Naive thymus-derived CD4-positive, alpha-beta T cell (primary cell): ENCODE measurements at regions of chr2 and their contacts with region 1.

Region 1: GRCh38 chr2:8761529-8762164 is 75.8 kb downstream of the KIDINS220 start:
- DNase-seq: peak in 4 of 9 donors; percentile 1 to 17 (median 10)
- ATAC-seq: no peak
- H3K4me3 ChIP-seq: no peak overlapping the region
- H3K4me3 Mint-ChIP-seq: no peak overlapping the region
- H3K27ac ChIP-seq: no peak overlapping the region
- H3K27ac Mint-ChIP-seq: no peak overlapping the region
- H3K4me1 ChIP-seq: no peaks in the 10 kb centered on the region
- H3K4me1 Mint-ChIP-seq: peaks cover 0 to 10% (median 0%) of the 10 kb centered on the region in 7 donors
- H3K27me3 ChIP-seq: no peaks in the 10 kb centered on the region
- H3K27me3 Mint-ChIP-seq: no peaks in the 10 kb centered on the region

Region 2: GRCh38 chr2:7203055-7203467 is 1558.6 kb before region 1 on chr2:
- CTCF ChIA-PET with region 1: no interaction called
- POLR2A ChIA-PET with region 1: no interaction called
- intact Hi-C with region 1: loop called (anchors 1 to 2 kb)
- DNase-seq: peak; percentile 31 to 65 (median 55)
- ATAC-seq: peak; percentile 81
- H3K4me3 ChIP-seq: no peak overlapping the region
- H3K4me3 Mint-ChIP-seq: no peak overlapping the region
- H3K27ac ChIP-seq: no peak overlapping the region
- H3K27ac Mint-ChIP-seq: no peak overlapping the region
- H3K4me1 ChIP-seq: no peaks in the 10 kb centered on the region
- H3K4me1 Mint-ChIP-seq: peaks cover 0 to 6% (median 0%) of the 10 kb centered on the region in 7 donors
- H3K27me3 ChIP-seq: no peaks in the 10 kb centered on the region
- H3K27me3 Mint-ChIP-seq: no peaks in the 10 kb centered on the region

Region 3: GRCh38 chr2:8692779-8693154 is 68.9 kb before region 1 on chr2:
- CTCF ChIA-PET with region 1: no interaction called
- POLR2A ChIA-PET with region 1: no interaction called
- intact Hi-C with region 1: loop called in 1 of 2 experiments (anchors 1 kb)
- DNase-seq: no peak
- ATAC-seq: no peak
- H3K4me3 ChIP-seq: no peak overlapping the region
- H3K4me3 Mint-ChIP-seq: peak overlapping the region in 1 of 10 donors; percentile 31
- H3K27ac ChIP-seq: no peak overlapping the region
- H3K27ac Mint-ChIP-seq: no peak overlapping the region
- H3K4me1 ChIP-seq: no peaks in the 10 kb centered on the region
- H3K4me1 Mint-ChIP-seq: peaks cover 0 to 6% (median 4%) of the 10 kb centered on the region in 7 donors
- H3K27me3 ChIP-seq: no peaks in the 10 kb centered on the region
- H3K27me3 Mint-ChIP-seq: peaks cover 20 to 38% (median 31%) of the 10 kb centered on the region in 5 donors